Endothelial cell of umbilical vein (primary cell): ENCODE measurements at regions of chr21 and their contacts with region 1.

Region 1: DNA sequence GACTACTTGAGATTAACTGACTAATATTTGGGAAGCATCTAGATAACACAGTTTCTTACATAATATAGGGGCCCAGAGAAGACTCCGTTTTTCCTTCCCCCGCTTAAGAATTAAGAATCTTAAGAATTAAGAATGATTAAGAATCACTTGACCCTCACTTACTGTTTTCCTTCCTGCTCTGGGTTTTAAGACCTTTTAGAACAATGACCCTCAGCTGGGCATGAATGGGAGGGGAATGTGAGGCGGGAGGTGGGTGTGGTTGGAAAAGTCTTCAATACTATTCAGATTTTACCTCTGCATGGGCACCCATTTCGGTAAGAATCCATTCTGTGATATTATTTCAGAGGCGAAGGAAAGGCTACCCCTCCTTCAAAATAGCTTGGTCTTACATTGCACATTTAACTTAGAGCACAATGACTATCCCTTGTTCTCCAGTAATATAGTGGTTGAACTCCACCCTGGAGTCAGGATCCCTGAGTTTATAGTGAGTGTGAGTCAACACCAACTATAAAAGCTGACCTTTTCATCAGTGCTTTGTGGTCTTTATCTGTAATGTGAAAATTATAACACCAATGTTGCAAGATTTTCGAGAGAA is 821.4 kb downstream of the USP25 start:
- DNase-seq: peak; percentile 54
- H3K4me3 ChIP-seq: no peak overlapping the region
- H3K27ac ChIP-seq: peak overlapping the region; percentile 71
- H3K4me1 ChIP-seq: peaks cover 41% of the 10 kb centered on the region
- H3K27me3 ChIP-seq: no peaks in the 10 kb centered on the region
- CTCF ChIP-seq: no peak
- POLR2A ChIP-seq: no peak

Region 2: DNA sequence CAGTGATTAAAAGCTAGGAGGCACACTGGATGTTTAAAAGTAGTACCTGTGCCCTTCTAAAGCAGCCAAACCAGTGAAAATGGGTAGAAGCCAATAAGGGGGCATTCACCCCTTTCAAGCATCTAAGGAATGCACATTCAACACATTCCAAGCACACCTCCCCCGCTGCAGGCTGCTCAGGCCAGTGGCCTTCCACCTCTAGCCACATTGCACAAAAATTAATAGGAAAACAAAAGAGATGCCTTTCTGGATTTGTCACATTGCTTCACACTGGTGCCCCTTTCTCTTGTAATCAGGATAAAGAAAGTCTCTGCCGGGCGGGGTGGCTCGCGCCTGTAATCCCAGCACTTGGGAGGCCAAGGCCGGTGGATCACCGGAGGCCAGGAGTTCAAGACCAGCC is 12.6 kb after region 1 on chr21:
- CTCF ChIA-PET with region 1: interaction called, 3 read pairs
- POLR2A ChIA-PET with region 1: no interaction called
- dilution Hi-C with region 1: no loop called
- intact Hi-C with region 1: loop called (anchors 1 kb)
- DNase-seq: peak; percentile 62
- H3K4me3 ChIP-seq: no peak overlapping the region
- H3K27ac ChIP-seq: peak overlapping the region; percentile 27
- H3K4me1 ChIP-seq: peaks cover 6% of the 10 kb centered on the region
- H3K27me3 ChIP-seq: no peaks in the 10 kb centered on the region
- CTCF ChIP-seq: no peak
- POLR2A ChIP-seq: no peak

Region 3: GRCh38 chr21:16678429-16679160 is 127.4 kb after region 1 on chr21:
- CTCF ChIA-PET with region 1: no interaction called
- POLR2A ChIA-PET with region 1: no interaction called
- dilution Hi-C with region 1: no loop called
- intact Hi-C with region 1: no loop called
- DNase-seq: no peak
- H3K4me3 ChIP-seq: no peak overlapping the region
- H3K27ac ChIP-seq: no peak overlapping the region
- H3K4me1 ChIP-seq: no peaks in the 10 kb centered on the region
- H3K27me3 ChIP-seq: no peaks in the 10 kb centered on the region
- CTCF ChIP-seq: no peak
- POLR2A ChIP-seq: no peak